ENCODE measurements at regions of chr6 and their contacts with region 1.

Region 1: GRCh38 chr6:33356295-33356694 is 35.3 kb upstream of the KIFC1 start:
- H3K4me3 ChIP-seq: no peak overlapping the region
- H3K27ac ChIP-seq: no peak overlapping the region
- H3K4me1 ChIP-seq: no peaks in the 10 kb centered on the region
- CTCF ChIP-seq: no peak

Region 2: GRCh38 chr6:33344701-33345697 is 11.3 kb before region 1 on chr6:
- CTCF ChIA-PET with region 1: interaction called, 30 read pairs
- POLR2A ChIA-PET with region 1: no interaction called
- H3K4me3 ChIP-seq: no peak overlapping the region
- H3K27ac ChIP-seq: no peak overlapping the region
- H3K4me1 ChIP-seq: peaks cover 4% of the 10 kb centered on the region
- CTCF ChIP-seq: peak; percentile 19; the same call in 1 of the 2 replicates